Common myeloid progenitor, CD34-positive (primary cell): ENCODE measurements at regions of chr12 and their contacts with region 1.

Region 1: DNA sequence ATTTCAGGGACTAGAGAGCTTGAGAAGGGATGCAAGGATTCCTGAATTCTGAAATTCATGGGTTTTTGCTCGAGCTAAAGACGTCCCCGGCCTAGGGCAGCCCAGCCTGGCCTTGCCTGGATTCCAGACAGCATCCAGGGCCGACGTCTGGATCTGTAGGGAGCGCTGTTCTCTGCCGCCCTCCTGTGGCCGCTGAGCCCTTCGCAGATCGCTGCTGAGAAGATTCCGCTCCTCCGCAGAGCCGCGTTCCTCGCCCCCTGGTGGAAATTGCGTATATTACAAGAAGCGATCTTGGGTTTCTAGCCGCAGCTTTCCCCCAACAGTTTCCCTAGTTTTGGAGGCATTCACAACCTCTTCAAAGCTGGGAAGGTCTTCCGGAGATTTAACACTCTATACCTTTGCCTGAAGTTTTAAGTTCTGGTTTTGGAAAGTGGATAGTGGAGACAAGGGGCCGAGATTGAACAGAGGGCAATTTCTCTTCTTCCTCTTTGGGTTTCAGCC is 5.1 kb downstream of the CISTR start:
- DNase-seq: peak; percentile 84 to 92 (median 87)
- H3K4me3 ChIP-seq: no peak overlapping the region
- H3K27ac ChIP-seq: no peak overlapping the region
- H3K4me1 ChIP-seq: peaks cover 0 to 25% (median 21%) of the 10 kb centered on the region in 4 experiments
- H3K27me3 ChIP-seq: peaks cover 16 to 95% (median 41%) of the 10 kb centered on the region in 5 experiments

Region 2: GRCh38 chr12:53543539-53543938 is 203.1 kb before region 1 on chr12:
- CTCF ChIA-PET with region 1: interaction called, 31 read pairs
- POLR2A ChIA-PET with region 1: no interaction called
- DNase-seq: peak; percentile 71 to 84 (median 84)
- H3K4me3 ChIP-seq: no peak overlapping the region
- H3K27ac ChIP-seq: no peak overlapping the region
- H3K4me1 ChIP-seq: peaks cover 0 to 4% (median 0%) of the 10 kb centered on the region in 4 experiments
- H3K27me3 ChIP-seq: no peaks in the 10 kb centered on the region

Region 3: DNA sequence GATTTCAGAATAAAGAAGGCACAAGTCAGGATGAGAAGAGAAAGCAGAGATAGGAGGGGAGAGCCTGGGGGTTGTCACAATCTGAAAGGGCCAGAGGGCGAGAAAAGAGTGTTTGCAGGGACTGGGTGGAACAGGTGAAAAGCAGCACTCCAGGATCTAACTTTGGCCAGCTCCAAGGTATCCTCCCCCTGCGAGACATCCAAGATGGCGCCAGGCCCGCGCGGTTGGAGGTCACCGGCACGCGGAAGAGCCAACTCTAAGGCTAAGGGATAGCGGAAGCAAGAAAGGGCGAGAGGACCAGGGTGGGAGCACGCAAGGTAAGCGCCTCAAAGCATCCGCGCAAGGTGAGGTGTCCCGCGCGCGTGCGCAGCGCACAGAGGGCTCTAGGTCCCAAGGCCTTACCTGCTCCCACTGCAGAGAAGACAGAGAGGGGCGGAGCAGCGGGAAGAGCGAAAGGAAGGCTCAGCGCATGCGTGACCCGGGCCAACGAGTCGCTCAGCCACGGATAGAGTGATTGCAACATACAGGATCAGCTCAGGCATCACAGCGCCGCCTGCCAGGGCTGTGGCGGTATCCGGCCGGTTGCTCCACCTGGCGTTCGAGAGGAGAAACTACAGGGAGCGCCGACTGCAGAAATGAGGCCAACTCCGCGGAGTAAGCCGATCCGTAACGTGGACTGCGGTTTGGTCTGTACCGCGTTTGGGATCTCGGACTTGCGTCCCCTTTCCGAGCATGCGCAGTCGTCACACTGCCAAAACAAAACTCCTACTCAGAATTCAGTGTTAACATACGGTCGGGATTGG is 70.8 kb before region 1 on chr12 and contains the start of gene ATP5MC2:
- CTCF ChIA-PET with region 1: interaction called, 19 read pairs
- POLR2A ChIA-PET with region 1: interaction called, 3 read pairs
- DNase-seq: peak; percentile 98 to 99 (median 99)
- H3K4me3 ChIP-seq: peak within 1 kb of the TSS; percentile 75 to 96 (median 89)
- H3K27ac ChIP-seq: peak within 1 kb of the TSS; percentile 75 to 91
- H3K4me1 ChIP-seq: peaks cover 3 to 33% (median 23%) of the 10 kb centered on the region in 4 experiments
- H3K27me3 ChIP-seq: peaks cover 0 to 21% (median 5%) of the 10 kb centered on the region in 5 experiments

Region 4: DNA sequence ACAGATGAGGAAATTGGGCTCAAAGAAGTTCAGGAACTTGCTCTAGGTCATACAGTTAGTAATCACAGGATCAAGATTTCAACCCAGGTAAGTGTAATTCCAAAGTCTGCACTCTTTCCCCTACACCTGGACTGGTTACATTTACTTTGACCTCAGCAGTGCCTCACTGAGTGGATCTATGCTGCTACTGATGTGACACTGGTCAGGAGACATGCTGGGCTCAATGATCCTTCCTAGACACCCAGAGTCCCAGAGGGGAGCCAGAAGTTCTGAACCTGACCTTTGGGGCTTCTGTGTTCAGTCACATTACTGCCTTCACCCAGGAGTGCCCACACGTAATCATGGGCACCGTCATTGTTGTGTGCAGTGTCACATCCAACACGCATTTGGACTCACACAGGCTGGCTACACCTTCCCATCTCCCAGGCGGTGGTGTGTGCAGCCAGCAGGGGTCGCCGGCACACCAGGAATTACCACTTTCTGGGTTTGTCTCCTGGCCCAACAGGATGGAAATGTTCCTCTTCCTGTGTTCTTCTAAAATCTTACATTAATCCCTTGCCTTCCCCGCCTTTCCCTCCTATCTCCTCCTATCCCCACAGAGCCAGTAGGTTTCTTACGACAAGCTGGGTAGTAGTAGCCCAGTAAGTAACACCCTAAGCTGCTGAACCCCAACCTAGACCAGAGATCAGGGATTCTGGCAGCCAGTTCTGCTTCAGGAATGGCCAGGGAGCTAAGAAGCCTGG is 45.0 kb before region 1 on chr12:
- CTCF ChIA-PET with region 1: interaction called, 184 read pairs
- POLR2A ChIA-PET with region 1: interaction called, 4 read pairs
- DNase-seq: peak; percentile 56 to 66 (median 57)
- H3K4me3 ChIP-seq: no peak overlapping the region
- H3K27ac ChIP-seq: no peak overlapping the region
- H3K4me1 ChIP-seq: peaks cover 0 to 5% (median 2%) of the 10 kb centered on the region in 4 experiments
- H3K27me3 ChIP-seq: peaks cover 20 to 87% (median 40%) of the 10 kb centered on the region in 5 experiments

Region 5: GRCh38 chr12:53727310-53728041 is 19.2 kb before region 1 on chr12 and contains the start of gene CALCOCO1:
- CTCF ChIA-PET with region 1: interaction called, 148 read pairs
- POLR2A ChIA-PET with region 1: no interaction called
- DNase-seq: peak; percentile 97 to 99 (median 99)
- H3K4me3 ChIP-seq: peak within 1 kb of the TSS; percentile 62 to 99 (median 86)
- H3K27ac ChIP-seq: peak within 1 kb of the TSS; percentile 48 to 72
- H3K4me1 ChIP-seq: peaks cover 6 to 18% (median 13%) of the 10 kb centered on the region in 4 experiments
- H3K27me3 ChIP-seq: peaks cover 0 to 7% (median 0%) of the 10 kb centered on the region in 5 experiments